H1 (cell line): ENCODE measurements at regions of chr10 and their contacts with region 1.

Region 1: DNA sequence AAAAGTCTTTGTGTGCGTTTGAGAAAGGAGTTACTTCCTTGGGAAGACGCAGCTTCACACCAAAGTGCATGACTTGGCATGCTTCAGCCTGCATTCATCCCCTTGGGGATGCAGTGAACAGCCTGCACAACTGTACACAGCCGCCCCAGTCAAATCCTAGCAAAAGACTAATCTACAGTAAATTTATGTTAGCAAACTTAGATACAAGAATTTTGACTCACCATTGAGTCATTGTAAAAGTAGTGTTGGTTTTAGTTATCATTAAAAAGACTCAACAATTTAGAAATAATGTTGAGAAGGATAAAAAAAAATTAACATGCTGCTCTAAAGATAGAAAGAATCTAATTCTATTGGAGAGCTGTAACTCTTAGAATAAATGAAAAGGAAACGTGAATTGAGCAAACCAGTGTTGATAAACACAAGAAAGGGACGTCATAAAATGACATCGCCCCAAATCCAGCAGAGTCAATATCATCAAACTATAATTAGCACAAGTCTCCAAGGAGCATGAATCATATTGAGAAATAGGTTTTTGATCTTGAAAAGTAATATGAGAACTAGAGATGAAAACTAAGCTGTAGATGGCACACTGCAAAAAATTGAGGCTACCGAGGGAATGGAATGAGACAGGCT is 11.9 kb upstream of the OPTN start:
- DNase-seq: no peak
- H3K4me3 ChIP-seq: no peak overlapping the region
- H3K27ac ChIP-seq: no peak overlapping the region
- H3K4me1 ChIP-seq: no peaks in the 10 kb centered on the region
- H3K27me3 ChIP-seq: no peaks in the 10 kb centered on the region
- CTCF ChIP-seq: no peak
- EP300 ChIP-seq: no peak
- POLR2A ChIP-seq: no peak
- RAD21 ChIP-seq: no peak

Region 2: GRCh38 chr10:12949248-12949647 is 138.9 kb before region 1 on chr10:
- CTCF ChIA-PET with region 1: interaction called, 11 read pairs
- POLR2A ChIA-PET with region 1: no interaction called
- DNase-seq: peak in 1 of 2 experiments; percentile 52
- H3K4me3 ChIP-seq: no peak overlapping the region
- H3K27ac ChIP-seq: no peak overlapping the region
- H3K4me1 ChIP-seq: no peaks in the 10 kb centered on the region
- H3K27me3 ChIP-seq: no peaks in the 10 kb centered on the region
- CTCF ChIP-seq: peak; percentile 41 to 69 (median 68); a peak in 3 of 4 replicates
- EP300 ChIP-seq: no peak
- POLR2A ChIP-seq: no peak
- RAD21 ChIP-seq: peak; percentile 39 to 47

Region 3: DNA sequence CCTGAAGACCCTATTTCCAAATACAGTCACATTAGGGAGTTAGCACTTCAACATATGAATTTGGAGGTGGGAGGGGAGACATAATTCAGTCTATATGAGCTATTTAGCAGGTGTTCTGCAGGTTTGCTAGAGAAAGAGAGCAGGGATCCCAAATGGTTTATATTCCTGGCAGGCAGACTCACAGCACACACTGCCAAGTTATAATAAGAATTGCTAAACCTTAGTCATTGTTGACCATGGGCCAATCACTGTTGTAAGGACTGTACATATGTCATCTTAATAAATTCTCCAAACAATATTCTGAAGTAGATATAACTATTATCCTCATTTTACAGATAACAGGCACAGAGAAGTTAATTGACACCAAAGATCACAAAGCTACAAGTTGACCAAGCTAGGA is 85.1 kb before region 1 on chr10:
- CTCF ChIA-PET with region 1: no interaction called
- POLR2A ChIA-PET with region 1: no interaction called
- DNase-seq: no peak
- H3K4me3 ChIP-seq: no peak overlapping the region
- H3K27ac ChIP-seq: no peak overlapping the region
- H3K4me1 ChIP-seq: no peaks in the 10 kb centered on the region; a peak in 1 of 7 replicates
- H3K27me3 ChIP-seq: peaks cover 9 to 32% (median 22%) of the 10 kb centered on the region in 4 experiments
- CTCF ChIP-seq: no peak
- EP300 ChIP-seq: no peak
- POLR2A ChIP-seq: no peak
- RAD21 ChIP-seq: no peak

Region 4: DNA sequence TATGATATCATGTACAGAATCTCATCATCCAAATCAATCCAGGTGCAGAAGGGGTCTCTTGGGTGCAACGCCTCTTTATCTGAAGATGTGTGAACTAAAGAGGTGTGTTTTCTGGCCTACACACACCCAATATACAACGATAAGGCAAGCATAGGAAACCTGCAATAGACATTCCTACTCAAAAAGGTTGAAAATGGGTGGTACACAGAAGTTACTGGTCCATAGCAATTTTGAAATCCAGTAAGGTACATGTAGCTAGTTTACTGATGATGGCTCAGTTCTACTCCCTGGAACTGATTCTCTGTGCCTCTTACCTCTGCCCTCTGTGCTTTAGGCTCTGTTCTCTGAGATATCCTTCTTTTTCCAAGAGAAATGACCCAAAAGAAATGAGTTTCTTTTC is 64.3 kb before region 1 on chr10:
- CTCF ChIA-PET with region 1: no interaction called
- POLR2A ChIA-PET with region 1: no interaction called
- DNase-seq: no peak
- H3K4me3 ChIP-seq: no peak overlapping the region
- H3K27ac ChIP-seq: no peak overlapping the region
- H3K4me1 ChIP-seq: no peaks in the 10 kb centered on the region
- H3K27me3 ChIP-seq: no peaks in the 10 kb centered on the region
- CTCF ChIP-seq: no peak
- EP300 ChIP-seq: no peak
- POLR2A ChIP-seq: no peak
- RAD21 ChIP-seq: no peak

Region 5: DNA sequence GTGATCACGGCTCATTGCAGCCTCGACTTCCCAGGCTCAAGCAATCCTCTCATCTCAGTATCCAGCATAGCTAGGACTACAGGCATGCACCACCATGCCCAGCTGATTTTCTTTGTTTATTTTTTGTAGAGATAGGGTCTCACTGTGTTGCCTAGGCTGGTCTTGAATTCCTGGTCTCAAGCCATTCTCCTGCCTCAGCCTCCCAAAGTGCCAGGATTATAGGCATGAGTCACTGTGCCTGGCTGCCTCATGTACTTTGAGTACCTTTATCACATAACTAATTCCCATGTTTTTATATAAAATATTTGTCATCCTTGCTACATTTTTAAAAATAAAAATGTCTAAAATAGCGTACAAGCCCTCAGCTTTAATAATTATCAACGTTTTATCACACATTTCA is 51.3 kb before region 1 on chr10:
- CTCF ChIA-PET with region 1: no interaction called
- POLR2A ChIA-PET with region 1: no interaction called
- DNase-seq: no peak
- H3K4me3 ChIP-seq: no peak overlapping the region
- H3K27ac ChIP-seq: no peak overlapping the region
- H3K4me1 ChIP-seq: no peaks in the 10 kb centered on the region
- H3K27me3 ChIP-seq: no peaks in the 10 kb centered on the region
- CTCF ChIP-seq: no peak
- EP300 ChIP-seq: no peak
- POLR2A ChIP-seq: no peak
- RAD21 ChIP-seq: no peak

Region 6: GRCh38 chr10:13056456-13057077 is 31.5 kb before region 1 on chr10:
- CTCF ChIA-PET with region 1: interaction called, 10 read pairs
- POLR2A ChIA-PET with region 1: no interaction called
- DNase-seq: no peak
- H3K4me3 ChIP-seq: no peak overlapping the region
- H3K27ac ChIP-seq: no peak overlapping the region
- H3K4me1 ChIP-seq: peaks cover 0 to 1% (median 0%) of the 10 kb centered on the region in 4 experiments; a peak in 3 of 7 replicates
- H3K27me3 ChIP-seq: no peaks in the 10 kb centered on the region; a peak in 2 of 7 replicates
- CTCF ChIP-seq: peak; percentile 19 to 60 (median 54)
- EP300 ChIP-seq: no peak
- POLR2A ChIP-seq: no peak
- RAD21 ChIP-seq: peak; percentile 69 to 77

Region 7: GRCh38 chr10:13074561-13075451 is 13.3 kb before region 1 on chr10:
- CTCF ChIA-PET with region 1: interaction called, 11 read pairs
- POLR2A ChIA-PET with region 1: no interaction called
- DNase-seq: peak; percentile 25 to 83
- H3K4me3 ChIP-seq: no peak overlapping the region
- H3K27ac ChIP-seq: no peak overlapping the region
- H3K4me1 ChIP-seq: peaks cover 0 to under 1% (median under 1%) of the 10 kb centered on the region in 4 experiments; a peak in 2 of 7 replicates
- H3K27me3 ChIP-seq: no peaks in the 10 kb centered on the region
- CTCF ChIP-seq: peak; percentile 88 to 89 (median 89)
- EP300 ChIP-seq: no peak
- POLR2A ChIP-seq: no peak
- RAD21 ChIP-seq: peak; percentile 97

Region 8: GRCh38 chr10:13099666-13100348 is 11.7 kb after region 1 on chr10 and contains the start of gene OPTN:
- CTCF ChIA-PET with region 1: interaction called, 28 read pairs
- POLR2A ChIA-PET with region 1: interaction called, 3 read pairs
- DNase-seq: peak; percentile 21 to 88
- H3K4me3 ChIP-seq: peak within 1 kb of the TSS; percentile 54 to 87 (median 82)
- H3K27ac ChIP-seq: no peak within 1 kb of the TSS
- H3K4me1 ChIP-seq: peaks cover 0 to 3% (median 2%) of the 10 kb centered on the region in 4 experiments; a peak in 3 of 7 replicates
- H3K27me3 ChIP-seq: no peaks in the 10 kb centered on the region; a peak in 1 of 7 replicates
- CTCF ChIP-seq: peak in 2 of 3 experiments; percentile 43 to 56; a peak in 3 of 4 replicates
- EP300 ChIP-seq: no peak
- POLR2A ChIP-seq: no peak
- RAD21 ChIP-seq: peak; percentile 46 to 54
- total RNA-seq, gene OPTN: 17.7 and 20.1 TPM in 2 replicates